Pancreas (tissue), 10 donors: ENCODE measurements at regions of chr15 and their contacts with region 1.

Region 1: DNA sequence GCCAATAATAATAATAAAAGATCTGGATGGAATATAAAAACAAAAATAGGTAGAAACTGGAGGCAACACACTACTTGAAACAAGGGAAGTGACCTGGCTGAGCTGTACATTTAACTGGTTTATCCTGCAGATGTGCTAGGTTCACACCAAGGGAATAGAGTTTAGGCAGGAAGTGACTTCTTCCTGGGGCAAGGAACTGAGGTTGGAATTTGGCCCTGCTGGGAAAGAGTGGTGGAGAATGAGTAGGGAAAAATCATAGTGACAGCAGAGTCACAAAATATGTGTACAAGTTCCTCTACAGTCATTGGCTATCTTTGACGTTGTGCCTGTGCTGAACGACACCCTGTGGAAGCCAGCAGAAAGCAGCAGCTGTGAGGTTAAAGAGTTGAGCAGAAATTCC is 44.1 kb downstream of the ARHGAP11B start:
- DNase-seq: no peak
- ATAC-seq: no peak
- H3K4me3 ChIP-seq: no peak overlapping the region
- H3K27ac ChIP-seq: no peak overlapping the region
- H3K4me1 ChIP-seq: no peaks in the 10 kb centered on the region
- H3K27me3 ChIP-seq: no peaks in the 10 kb centered on the region
- CTCF ChIP-seq: no peak

Region 2: DNA sequence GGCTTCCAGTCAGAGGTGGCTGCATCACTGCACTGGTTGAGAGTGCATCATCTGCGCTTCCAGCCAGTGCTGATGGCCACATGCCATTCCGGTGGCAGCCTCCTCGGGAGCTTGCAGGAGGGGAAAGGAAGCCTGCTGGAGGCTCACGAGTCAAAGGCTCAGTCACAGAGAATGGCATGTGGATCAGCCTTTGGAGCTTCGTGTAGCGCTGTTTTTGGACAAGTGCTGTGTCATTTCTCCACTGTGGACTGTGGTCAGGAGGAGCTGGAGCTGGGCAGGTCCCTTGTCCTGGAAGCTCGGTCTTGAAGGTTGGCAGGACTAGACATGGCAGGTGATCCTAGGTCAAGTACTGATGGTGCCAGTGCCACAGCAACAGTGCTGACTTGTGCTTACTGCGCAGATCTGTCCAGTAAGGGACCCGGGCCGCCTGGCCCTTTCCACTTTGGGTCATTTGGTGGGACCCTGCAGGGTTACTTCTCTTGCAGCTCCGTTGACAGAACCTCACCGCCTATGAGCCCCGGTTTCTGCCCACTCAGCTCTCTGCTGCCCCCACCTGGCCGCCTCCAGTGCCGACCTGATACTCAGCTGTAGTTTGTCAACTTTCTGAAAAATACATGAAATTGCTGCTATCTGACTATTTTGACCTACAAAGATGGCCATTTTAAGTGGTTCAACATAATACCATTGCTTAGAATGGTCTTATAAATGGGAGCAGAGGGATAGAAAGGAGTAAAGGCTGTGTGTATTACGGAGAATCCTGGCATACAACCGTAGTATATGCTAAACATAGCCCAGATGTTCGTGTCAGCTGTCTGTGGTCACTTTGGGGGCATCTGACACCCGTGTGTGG is 459.1 kb after region 1 on chr15:
- intact Hi-C with region 1: loop called in 1 of 3 experiments (anchors 10 kb)
- DNase-seq: peak; percentile 39 to 95 (median 72)
- ATAC-seq: peak; percentile 73 to 98 (median 96)
- H3K4me3 ChIP-seq: no peak overlapping the region
- H3K27ac ChIP-seq: no peak overlapping the region
- H3K4me1 ChIP-seq: no peaks in the 10 kb centered on the region
- H3K27me3 ChIP-seq: no peaks in the 10 kb centered on the region
- CTCF ChIP-seq: peak; percentile 52 to 97 (median 87)